Calu3 (cell line): ENCODE measurements at regions of chr9 and their contacts with region 1.

Region 1: DNA sequence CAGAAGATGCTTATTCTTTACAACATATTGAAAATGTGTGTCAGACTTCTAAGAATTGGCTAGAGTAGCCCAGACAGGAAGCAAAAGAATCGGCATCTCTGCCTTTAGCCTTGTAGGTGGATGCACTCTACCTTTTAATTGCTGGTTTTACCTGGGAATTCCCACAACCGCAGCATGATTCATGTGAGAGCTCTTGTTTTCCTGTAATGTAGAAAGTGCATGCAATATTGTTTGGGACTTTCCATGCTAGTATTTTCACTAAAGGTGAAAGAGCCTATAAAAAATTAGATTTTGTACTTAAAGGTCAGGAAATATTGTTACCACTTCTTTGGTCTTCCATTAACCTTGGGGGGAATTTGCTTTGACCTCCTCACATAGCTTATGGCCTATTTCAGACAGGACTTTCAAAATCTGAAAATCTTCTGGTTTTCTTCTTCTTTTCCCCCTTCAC is 89.8 kb downstream of the NTRK2 start:
- DNase-seq: peak; percentile 38
- H3K4me3 Mint-ChIP-seq: no peak overlapping the region
- H3K27ac Mint-ChIP-seq: peak overlapping the region; percentile 78
- H3K4me1 Mint-ChIP-seq: peaks cover 22% of the 10 kb centered on the region
- H3K27me3 Mint-ChIP-seq: no peaks in the 10 kb centered on the region
- CTCF ChIP-seq: no peak

Region 2: GRCh38 chr9:83688921-83689320 is 1070.4 kb before region 1 on chr9:
- CTCF ChIA-PET with region 1: no interaction called
- intact Hi-C with region 1: no loop called
- DNase-seq: no peak
- H3K4me3 Mint-ChIP-seq: no peak overlapping the region
- H3K27ac Mint-ChIP-seq: no peak overlapping the region
- H3K4me1 Mint-ChIP-seq: peaks cover 9% of the 10 kb centered on the region
- H3K27me3 Mint-ChIP-seq: no peaks in the 10 kb centered on the region
- CTCF ChIP-seq: no peak

Region 3: GRCh38 chr9:84711902-84712301 is 47.4 kb before region 1 on chr9:
- CTCF ChIA-PET with region 1: no interaction called
- intact Hi-C with region 1: loop called (anchors 5 kb)
- DNase-seq: peak; percentile 82
- H3K4me3 Mint-ChIP-seq: peak overlapping the region; percentile 56
- H3K27ac Mint-ChIP-seq: peak overlapping the region; percentile 84
- H3K4me1 Mint-ChIP-seq: peaks cover 54% of the 10 kb centered on the region
- H3K27me3 Mint-ChIP-seq: no peaks in the 10 kb centered on the region
- CTCF ChIP-seq: no peak

Region 4: DNA sequence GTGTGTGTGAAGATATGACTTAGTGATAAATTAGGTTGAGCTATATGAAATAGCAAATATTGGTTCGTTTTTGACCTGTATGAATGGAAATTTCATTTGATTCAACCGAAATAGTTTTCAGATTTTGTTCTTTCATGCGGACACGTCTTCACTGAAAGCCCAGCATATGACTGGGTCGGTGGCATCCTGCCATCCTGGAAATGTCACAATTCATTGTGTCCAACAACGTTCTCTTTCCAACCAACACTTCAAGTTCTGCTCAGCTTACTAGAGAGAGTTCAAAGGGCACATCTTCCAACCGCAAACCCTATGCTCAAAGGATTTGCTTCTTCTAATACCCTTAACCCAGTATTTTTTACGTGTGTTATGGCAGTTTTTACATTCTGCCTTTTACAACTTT is 162.7 kb after region 1 on chr9:
- CTCF ChIA-PET with region 1: no interaction called
- intact Hi-C with region 1: no loop called
- DNase-seq: no peak
- H3K4me3 Mint-ChIP-seq: no peak overlapping the region
- H3K27ac Mint-ChIP-seq: no peak overlapping the region
- H3K4me1 Mint-ChIP-seq: no peaks in the 10 kb centered on the region
- H3K27me3 Mint-ChIP-seq: peaks cover 24% of the 10 kb centered on the region
- CTCF ChIP-seq: no peak